ENCODE measurements at regions of chr13 and their contacts with region 1.

Region 1: DNA sequence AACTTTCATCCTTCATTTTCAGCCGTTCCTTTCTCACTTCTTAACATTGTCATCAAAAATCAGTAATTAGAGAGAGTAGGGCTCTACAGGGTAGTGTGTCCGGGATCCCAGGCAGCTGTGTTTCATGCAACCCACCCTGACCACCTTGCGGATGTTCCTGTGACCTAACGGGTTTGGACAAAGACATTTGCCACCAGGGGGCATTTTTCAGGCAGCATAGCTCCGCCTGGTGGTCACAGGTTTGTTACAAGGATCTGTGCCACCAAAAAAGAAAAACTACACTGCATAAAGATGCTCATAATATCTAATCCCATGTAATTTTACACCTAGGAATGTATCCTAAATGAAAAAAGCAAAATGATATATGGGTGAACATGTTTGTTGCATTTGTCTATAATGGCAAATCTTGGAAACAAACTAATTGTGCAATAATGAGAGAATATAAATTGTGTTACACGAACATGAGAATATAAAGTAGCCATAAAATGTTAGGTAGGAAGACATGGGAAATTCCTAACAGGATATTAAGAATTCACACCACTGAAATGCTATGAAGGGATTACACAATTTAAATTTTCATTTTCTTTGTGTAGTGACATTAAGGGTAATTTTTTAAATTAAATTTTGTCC is 123.0 kb downstream of the SLC7A1 start:
- DNase-seq: peak; percentile 72
- H3K4me3 ChIP-seq: no peak overlapping the region; a peak in 1 of 4 replicates
- H3K27ac ChIP-seq: no peak overlapping the region
- H3K4me1 ChIP-seq: no peaks in the 10 kb centered on the region
- H3K27me3 ChIP-seq: no peaks in the 10 kb centered on the region
- CTCF ChIP-seq: peak; percentile 99
- EP300 ChIP-seq: no peak
- RAD21 ChIP-seq: peak; percentile 84

Region 2: GRCh38 chr13:29454911-29455481 is 17.5 kb before region 1 on chr13:
- CTCF ChIA-PET with region 1: interaction called, 33 read pairs
- POLR2A ChIA-PET with region 1: no interaction called
- DNase-seq: no peak
- H3K4me3 ChIP-seq: no peak overlapping the region
- H3K27ac ChIP-seq: no peak overlapping the region
- H3K4me1 ChIP-seq: peaks cover 7 to 26% of the 10 kb centered on the region in 2 experiments; a peak in 3 of 4 replicates
- H3K27me3 ChIP-seq: no peaks in the 10 kb centered on the region
- CTCF ChIP-seq: peak; percentile 35
- EP300 ChIP-seq: no peak
- RAD21 ChIP-seq: peak; percentile 33; the same call in 1 of the 2 replicates

Region 3: DNA sequence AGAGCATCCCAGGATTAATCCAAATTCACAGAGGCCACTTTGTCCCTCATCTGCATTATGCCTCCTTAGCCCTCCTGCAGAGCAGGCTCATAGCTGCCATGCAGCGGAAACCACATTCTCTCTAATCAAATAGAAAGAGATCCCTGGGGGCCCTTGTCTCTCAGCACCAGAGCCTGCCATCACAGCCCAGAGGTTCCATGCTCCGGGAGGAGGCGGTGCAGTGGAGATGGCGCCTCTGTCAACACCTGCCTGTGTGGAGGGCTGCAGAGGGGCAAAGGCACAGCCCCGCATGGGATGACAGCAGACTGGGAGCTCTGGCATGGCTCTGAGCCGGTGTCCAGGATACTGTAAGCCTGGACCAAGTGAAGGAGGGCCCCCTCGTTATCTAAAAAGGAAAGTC is 11.8 kb after region 1 on chr13:
- CTCF ChIA-PET with region 1: interaction called, 45 read pairs
- POLR2A ChIA-PET with region 1: no interaction called
- DNase-seq: peak; percentile 71
- H3K4me3 ChIP-seq: no peak overlapping the region
- H3K27ac ChIP-seq: peak overlapping the region in 1 of 2 experiments; percentile 58; a peak in 2 of 4 replicates
- H3K4me1 ChIP-seq: peaks cover 0 to 26% of the 10 kb centered on the region in 2 experiments; a peak in 2 of 4 replicates
- H3K27me3 ChIP-seq: no peaks in the 10 kb centered on the region
- CTCF ChIP-seq: no peak
- EP300 ChIP-seq: no peak
- RAD21 ChIP-seq: no peak

Region 4: DNA sequence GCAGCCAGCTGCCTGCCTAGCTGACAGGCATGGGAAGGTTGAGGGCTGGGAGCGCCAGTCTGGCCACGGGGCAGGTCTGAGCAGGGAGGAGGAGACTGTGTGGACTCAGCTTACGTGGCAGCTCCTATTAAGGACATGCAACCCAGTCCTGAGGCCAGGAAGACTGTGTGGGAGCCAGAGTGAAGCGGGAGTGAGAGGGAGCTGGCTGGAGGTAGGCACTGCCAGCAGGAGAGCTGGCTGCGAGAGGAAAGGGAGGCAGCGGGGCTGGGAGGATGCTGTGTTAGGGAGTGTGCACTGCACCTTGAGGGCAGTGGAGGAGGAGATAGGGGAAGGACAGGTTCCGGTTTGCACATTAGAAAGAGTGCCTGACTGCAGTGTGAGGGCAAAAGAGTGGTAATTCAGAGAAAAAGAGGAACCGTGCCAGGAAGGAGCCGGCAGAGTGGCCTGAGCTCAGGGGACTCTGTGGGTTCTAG is 23.8 kb after region 1 on chr13:
- CTCF ChIA-PET with region 1: interaction called, 36 read pairs
- POLR2A ChIA-PET with region 1: no interaction called
- DNase-seq: no peak
- H3K4me3 ChIP-seq: no peak overlapping the region
- H3K27ac ChIP-seq: no peak overlapping the region
- H3K4me1 ChIP-seq: peaks cover 0 to 12% of the 10 kb centered on the region in 2 experiments; a peak in 2 of 4 replicates
- H3K27me3 ChIP-seq: no peaks in the 10 kb centered on the region; the same call in 1 of the 2 replicates
- CTCF ChIP-seq: no peak
- EP300 ChIP-seq: no peak
- RAD21 ChIP-seq: no peak

Measured in SK-N-SH (cell line).